Body of pancreas (tissue), 4 donors: ENCODE measurements at regions of chr11 and their contacts with region 1.

Region 1: DNA sequence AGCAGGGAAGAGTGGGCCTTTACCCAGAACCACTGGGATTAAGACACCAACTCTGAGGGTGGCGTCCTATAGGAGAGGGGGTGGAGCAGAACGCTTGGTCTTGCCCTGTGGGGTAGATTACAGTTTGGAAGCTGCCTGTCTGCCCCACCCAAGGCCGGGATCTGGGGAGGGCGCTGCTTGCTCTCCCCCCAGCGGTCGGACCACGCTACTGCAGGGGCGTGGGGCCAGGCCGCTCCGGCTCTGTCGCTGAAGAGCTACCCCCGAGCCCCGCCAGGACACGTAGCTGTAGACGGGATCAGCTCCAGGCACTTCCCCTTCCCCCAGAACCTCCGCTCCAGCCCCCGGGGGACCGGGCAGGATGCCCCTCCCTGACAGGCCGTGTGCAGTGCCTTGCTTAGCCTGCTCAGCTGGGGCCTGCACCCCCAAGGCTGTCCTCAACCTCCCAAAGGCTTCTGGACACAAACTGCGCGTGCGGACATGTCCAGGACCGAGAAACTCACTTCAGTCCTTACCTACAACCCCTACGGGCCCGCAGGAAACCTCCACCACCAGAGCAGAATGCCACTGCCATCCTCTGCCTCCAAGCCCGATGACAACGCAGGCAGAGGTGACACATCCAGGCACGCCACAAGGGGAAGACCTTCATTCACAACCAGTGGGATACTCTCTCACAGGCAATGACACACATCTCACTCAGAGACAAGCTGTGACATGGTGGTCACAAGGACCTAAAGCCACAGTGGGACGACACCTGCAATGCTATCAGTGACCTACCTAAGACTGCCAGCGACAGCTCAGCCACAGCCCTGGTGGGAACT is 3.6 kb downstream of the AHNAK start:
- DNase-seq: peak; percentile 63 to 70 (median 69)
- ATAC-seq: peak; percentile 35
- H3K4me3 ChIP-seq: no peak overlapping the region
- H3K27ac ChIP-seq: peak overlapping the region in 3 of 4 donors; percentile 37 to 93 (median 86)
- H3K4me1 ChIP-seq: peaks cover 88% of the 10 kb centered on the region
- H3K27me3 ChIP-seq: no peaks in the 10 kb centered on the region
- CTCF ChIP-seq: peak; percentile 84 to 99 (median 95)
- POLR2A ChIP-seq: peak in 1 of 3 donors; percentile 13

Region 2: DNA sequence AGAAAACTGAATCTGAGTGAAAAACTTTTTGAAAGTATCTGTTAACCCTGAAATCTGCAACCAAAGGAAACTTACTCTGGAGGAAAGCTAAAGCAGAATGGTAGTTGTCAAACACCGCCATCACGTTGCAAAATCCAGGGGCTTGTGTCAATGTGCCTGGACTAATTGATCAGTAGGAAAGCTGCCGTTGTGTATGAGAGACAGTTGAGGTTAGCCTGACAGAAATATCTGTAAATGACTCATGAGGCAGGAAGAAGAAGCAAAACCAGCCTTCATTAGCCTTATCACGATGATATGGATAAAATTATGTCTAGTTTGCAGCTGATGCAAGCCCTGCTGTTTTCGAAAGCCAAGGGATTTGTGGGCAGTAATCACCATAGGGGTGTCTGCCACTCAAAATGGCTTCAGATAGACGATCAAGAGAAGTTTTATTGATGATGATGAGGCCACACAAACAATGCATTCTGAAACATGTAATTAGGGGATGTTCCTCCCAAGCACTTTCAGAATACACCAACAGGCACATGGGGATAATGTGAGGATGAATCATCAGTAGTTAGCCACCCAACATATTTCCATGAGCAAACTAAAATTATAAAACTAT is 115.2 kb before region 1 on chr11:
- intact Hi-C with region 1: loop called (anchors 5 kb)
- DNase-seq: no peak
- ATAC-seq: no peak
- H3K4me3 ChIP-seq: no peak overlapping the region
- H3K27ac ChIP-seq: peak overlapping the region in 3 of 4 donors; percentile 26 to 58 (median 41)
- H3K4me1 ChIP-seq: peaks cover 35% of the 10 kb centered on the region
- H3K27me3 ChIP-seq: no peaks in the 10 kb centered on the region
- CTCF ChIP-seq: no peak
- POLR2A ChIP-seq: no peak